HCT116 (cell line): ENCODE measurements at regions of chr13 and their contacts with region 1.

Region 1: DNA sequence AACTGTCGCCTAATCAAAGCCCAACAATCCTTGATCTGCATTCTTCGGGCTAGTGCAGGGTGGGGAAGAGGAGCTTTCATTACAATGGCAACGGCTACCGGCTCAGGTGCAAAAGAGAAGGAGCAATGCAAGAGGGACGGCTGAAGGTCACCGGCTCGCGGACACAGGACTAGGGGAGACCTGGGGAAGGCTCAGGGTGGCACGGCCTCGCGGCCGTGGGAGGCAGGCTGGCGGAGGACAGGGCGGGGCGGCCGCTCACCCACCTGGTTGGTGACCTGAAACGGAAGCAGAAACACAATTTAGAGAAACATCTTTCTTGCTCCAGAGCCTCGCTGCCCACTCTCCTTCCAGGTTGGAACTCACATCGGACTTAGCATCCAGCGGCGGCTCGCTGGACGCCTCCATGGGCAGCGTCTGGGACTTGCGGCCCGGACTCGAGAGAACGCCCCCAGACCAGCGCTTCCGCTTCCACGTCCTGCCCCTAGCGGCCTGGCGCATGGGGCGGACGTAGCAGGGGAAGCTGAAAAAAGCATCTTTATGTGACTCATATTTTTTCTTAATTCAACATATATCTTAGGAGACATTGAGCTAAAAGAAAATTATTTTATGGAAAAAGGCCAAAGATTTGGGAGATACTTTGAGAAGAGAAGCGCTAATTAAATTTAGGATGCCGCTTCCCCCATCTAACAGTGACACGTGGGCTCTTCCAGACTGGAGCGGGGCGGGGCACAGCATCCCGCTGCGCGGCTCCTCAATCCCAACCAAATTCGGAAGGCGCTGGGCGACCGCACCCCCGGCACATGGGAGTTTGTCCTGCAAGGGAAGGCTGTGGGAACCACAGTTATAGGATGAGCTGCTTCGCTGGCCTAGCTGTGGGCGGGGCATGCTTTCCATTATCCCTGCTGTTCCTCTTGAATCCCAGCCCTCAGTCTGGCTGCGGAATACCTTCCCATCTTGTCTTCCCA is at the start of gene COMMD6:
- DNase-seq: peak; percentile 91
- ATAC-seq: peak; percentile 94
- H3K4me3 ChIP-seq: peak within 1 kb of the TSS; percentile 68 to 97
- H3K27ac ChIP-seq: peak within 1 kb of the TSS; percentile 36
- H3K4me1 ChIP-seq: peaks cover 9 to 20% of the 10 kb centered on the region in 2 experiments
- H3K27me3 ChIP-seq: no peaks in the 10 kb centered on the region
- CTCF ChIP-seq: peak in 1 of 3 experiments; percentile 27; a peak in 2 of 6 replicates
- POLR2A ChIP-seq: peak; percentile 82
- RAD21 ChIP-seq: no peak
- total RNA-seq, gene COMMD6: 108 TPM

Region 2: DNA sequence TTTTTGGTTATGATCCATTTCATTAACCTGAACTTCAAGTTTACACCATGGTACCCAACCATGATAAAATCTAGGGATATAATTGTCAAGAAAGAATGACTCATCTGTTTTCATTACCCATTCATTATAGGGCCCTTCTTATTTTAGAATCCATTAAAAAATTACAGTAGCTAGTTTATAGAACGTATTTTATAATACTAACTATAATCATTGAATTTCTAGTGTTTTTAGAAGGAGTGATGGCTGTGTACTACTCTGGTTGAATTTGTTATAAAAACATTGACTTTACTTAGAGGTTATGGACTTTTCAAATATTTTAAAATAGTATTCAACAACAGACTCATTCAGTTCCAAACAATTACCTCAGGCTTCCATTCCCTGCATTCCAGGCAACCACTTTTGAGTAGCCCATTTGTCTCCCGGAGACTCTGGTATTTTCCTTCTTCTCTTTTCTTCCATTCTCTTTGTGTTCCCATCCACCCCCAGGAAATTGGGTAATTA is 1331.6 kb before region 1 on chr13:
- CTCF ChIA-PET with region 1: no interaction called
- POLR2A ChIA-PET with region 1: no interaction called
- RAD21 ChIA-PET with region 1: no interaction called
- intact Hi-C with region 1: no loop called
- DNase-seq: no peak
- ATAC-seq: no peak
- H3K4me3 ChIP-seq: no peak overlapping the region
- H3K27ac ChIP-seq: no peak overlapping the region
- H3K4me1 ChIP-seq: no peaks in the 10 kb centered on the region
- H3K27me3 ChIP-seq: no peaks in the 10 kb centered on the region
- CTCF ChIP-seq: no peak
- POLR2A ChIP-seq: no peak
- RAD21 ChIP-seq: no peak

Region 3: GRCh38 chr13:75549262-75550158 is 11.8 kb after region 1 on chr13 and contains the start of gene UCHL3:
- CTCF ChIA-PET with region 1: interaction called, 4 read pairs
- POLR2A ChIA-PET with region 1: interaction called, 15 read pairs
- RAD21 ChIA-PET with region 1: no interaction called
- intact Hi-C with region 1: no loop called
- DNase-seq: peak; percentile 94
- ATAC-seq: peak; percentile 90
- H3K4me3 ChIP-seq: peak within 1 kb of the TSS; percentile 74 to 81
- H3K27ac ChIP-seq: peak within 1 kb of the TSS; percentile 63
- H3K4me1 ChIP-seq: peaks cover 5 to 19% of the 10 kb centered on the region in 2 experiments; a peak in 3 of 4 replicates
- H3K27me3 ChIP-seq: no peaks in the 10 kb centered on the region
- CTCF ChIP-seq: peak; percentile 70 to 97 (median 82)
- POLR2A ChIP-seq: peak; percentile 58
- RAD21 ChIP-seq: peak; percentile 78
- total RNA-seq, gene UCHL3: 32.4 TPM

Region 4: DNA sequence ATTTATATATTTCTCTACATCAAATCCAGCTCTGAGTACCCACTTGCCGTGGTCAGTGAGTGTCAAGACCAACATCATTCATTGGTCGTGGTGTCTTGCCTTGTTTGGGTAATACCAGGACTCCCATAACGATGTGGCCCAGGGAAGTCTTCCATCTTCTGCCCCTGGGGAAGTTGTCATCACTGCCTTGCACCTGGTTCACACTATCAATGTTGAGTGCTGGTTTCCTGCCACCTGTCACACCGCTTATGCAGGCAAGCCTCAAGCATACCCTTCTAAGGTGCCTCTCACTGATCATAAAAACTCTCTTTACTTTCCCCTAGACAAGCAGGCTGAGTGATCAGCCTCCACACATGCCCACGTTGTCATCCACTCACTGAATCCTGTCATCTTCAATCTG is 966.1 kb after region 1 on chr13:
- CTCF ChIA-PET with region 1: no interaction called
- POLR2A ChIA-PET with region 1: no interaction called
- RAD21 ChIA-PET with region 1: no interaction called
- intact Hi-C with region 1: no loop called
- DNase-seq: no peak
- ATAC-seq: no peak
- H3K4me3 ChIP-seq: no peak overlapping the region
- H3K27ac ChIP-seq: no peak overlapping the region
- H3K4me1 ChIP-seq: no peaks in the 10 kb centered on the region
- H3K27me3 ChIP-seq: no peaks in the 10 kb centered on the region
- CTCF ChIP-seq: no peak
- POLR2A ChIP-seq: no peak
- RAD21 ChIP-seq: no peak